AG04449 (cell line): ENCODE measurements at regions of chr1 and their contacts with region 1.

Region 1: DNA sequence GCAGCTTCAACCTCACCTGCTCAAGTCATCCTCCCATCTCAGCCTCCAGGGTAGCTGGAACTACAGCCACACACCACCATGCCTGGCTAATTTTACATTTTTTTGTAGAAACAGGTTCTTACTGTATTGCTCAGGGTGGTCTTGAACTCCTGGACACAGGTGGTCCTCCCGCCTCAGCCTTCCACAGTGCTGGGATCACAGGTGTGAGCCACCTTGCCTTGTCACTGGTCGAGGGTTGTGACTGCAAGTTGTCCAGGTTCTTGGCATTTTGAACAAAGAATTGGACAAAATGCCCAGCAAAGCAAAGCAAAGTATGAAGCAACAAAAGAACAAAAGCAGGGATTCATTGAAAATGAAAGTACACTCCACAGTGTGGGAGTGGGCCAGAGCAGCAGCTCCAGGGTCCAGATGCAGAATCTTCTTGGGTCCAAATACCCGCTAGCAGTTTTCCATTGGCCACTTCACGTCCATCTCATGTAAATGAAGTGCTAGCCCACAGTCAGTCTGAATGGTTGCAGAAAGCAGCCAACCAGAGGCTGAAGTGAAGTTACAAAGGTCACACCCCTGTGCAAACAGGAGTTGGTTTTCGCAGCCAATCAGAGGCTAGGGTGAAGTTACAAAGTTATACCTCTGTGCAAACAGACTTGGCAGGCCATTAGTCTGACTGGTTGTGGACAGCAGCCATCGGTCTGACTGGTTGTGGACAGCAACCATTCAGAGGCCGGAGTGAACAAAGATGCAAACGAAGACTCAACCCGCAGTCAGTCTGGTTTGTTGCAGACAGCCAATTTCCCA is 109.5 kb upstream of the KIF26B start:
- DNase-seq: no peak
- H3K4me3 ChIP-seq: no peak overlapping the region
- CTCF ChIP-seq: no peak

Region 2: DNA sequence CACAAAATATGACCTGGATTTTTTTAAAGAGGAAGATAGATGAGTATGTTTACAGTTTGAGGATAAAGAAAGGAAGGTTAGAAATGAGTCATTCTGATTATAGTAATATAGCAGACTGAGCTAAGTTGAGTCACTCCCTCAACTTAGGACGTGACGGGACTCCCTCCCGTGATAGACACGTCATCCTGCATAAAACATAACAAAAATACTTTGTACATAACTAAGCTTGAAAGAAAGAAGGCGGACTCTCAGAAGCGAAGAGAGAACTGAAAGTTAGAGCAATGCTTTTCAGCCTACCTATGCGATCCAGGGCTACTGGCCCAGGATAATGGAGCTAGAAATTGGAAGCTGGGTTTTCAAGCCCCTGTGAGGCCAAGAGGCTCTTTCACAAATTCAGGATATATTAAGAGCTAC is 445.3 kb before region 1 on chr1:
- CTCF ChIA-PET with region 1: interaction called, 25 read pairs
- POLR2A ChIA-PET with region 1: no interaction called
- DNase-seq: peak; percentile 84
- H3K4me3 ChIP-seq: peak overlapping the region; percentile 46
- CTCF ChIP-seq: no peak

Region 3: GRCh38 chr1:244835276-244836134 is 209.8 kb before region 1 on chr1 and contains the start of gene COX20:
- CTCF ChIA-PET with region 1: interaction called, 13 read pairs
- POLR2A ChIA-PET with region 1: interaction called, 4 read pairs
- DNase-seq: no peak
- H3K4me3 ChIP-seq: peak within 1 kb of the TSS; percentile 73
- CTCF ChIP-seq: no peak

Region 4: GRCh38 chr1:244854865-244855578 is 190.3 kb before region 1 on chr1:
- CTCF ChIA-PET with region 1: interaction called, 35 read pairs
- POLR2A ChIA-PET with region 1: no interaction called
- DNase-seq: no peak
- H3K4me3 ChIP-seq: no peak overlapping the region
- CTCF ChIP-seq: no peak

Region 5: DNA sequence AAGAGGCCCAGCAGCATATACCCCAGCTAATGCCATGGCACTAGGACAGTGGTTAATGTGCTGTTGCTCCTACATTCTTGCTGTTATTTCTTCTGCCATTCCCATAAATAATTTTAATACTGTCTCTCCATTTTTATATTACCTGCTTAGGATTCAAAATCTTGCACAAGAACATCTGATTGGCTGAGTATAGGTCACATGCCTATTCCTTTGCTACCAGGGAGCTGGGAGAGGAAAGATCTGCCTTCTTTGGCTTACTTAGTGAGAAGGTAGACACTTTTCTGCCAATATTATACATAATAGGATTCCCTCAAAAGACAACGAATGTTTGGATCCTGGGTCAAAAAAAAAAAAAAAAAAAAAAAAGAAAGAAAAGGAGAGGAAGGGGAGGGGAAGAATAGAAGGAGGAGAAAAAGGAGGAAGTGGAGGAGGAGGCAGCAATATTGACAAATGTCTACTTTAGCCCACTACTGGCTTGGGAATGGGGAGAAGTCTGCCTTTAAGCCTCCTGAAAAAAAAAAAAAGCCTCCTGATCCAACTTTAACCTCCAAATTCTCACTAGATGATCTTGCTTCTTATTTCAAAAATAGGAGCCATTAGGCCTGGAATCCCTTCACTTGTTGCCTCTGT is 46.5 kb before region 1 on chr1:
- CTCF ChIA-PET with region 1: interaction called, 13 read pairs
- POLR2A ChIA-PET with region 1: no interaction called
- DNase-seq: no peak
- H3K4me3 ChIP-seq: no peak overlapping the region
- CTCF ChIP-seq: no peak

Region 6: DNA sequence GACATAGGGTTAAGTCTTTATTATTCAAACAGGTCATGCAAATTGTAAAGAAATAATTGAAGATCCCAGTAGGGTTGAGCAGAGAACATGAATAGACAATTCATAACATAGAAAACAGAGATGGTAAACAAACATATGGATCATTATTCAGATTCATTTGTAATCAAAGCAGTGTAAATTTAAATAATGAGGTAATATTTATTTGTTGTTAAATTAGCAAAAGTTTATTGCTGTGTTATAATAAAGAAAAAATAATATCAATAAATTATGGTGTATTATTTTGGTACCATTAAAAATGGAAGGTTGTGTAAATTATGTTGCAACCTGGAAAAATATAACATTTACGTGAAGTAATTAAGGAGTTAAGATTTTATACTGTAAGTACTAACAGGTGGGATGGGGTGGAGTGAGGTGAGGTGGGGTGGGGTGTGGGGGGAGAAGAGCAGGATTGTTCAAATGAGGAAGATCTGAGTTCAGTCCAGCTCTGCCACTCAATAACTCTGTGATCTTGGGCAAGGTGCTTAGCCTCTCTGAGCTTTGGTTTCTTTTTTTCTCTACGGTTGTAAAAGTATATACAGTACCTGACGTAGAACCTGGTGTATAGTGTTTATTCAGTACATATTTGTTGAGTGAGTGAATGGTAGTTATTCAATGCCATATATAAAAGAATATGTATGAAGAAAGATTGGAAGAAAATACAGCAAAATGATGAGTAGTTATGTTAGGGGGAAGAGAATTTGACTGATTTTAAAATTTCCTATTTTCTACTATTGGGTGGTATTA is 30.8 kb before region 1 on chr1:
- CTCF ChIA-PET with region 1: interaction called, 28 read pairs
- POLR2A ChIA-PET with region 1: no interaction called
- DNase-seq: no peak
- H3K4me3 ChIP-seq: no peak overlapping the region
- CTCF ChIP-seq: no peak

Region 7: DNA sequence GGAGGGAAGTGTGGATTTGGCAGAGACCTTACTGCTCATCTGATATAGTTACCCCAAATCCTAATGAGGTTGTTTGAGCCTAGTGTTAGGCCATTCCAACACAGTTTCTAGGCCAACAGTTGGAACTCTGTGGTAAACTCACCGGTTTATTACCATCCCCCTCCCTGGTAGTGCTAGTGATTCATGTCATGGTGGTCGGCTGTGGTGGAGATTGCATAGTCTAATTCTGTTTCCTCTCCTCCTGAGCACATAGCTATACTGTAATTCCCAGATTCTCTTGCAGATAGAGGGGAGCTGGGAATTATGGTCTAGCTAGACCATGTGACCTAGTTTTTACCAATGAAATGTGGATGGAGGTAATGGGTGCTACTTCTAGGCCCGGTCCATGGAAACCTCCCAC is 14.2 kb before region 1 on chr1:
- CTCF ChIA-PET with region 1: interaction called, 47 read pairs
- POLR2A ChIA-PET with region 1: no interaction called
- DNase-seq: no peak
- H3K4me3 ChIP-seq: no peak overlapping the region
- CTCF ChIP-seq: no peak

Region 8: DNA sequence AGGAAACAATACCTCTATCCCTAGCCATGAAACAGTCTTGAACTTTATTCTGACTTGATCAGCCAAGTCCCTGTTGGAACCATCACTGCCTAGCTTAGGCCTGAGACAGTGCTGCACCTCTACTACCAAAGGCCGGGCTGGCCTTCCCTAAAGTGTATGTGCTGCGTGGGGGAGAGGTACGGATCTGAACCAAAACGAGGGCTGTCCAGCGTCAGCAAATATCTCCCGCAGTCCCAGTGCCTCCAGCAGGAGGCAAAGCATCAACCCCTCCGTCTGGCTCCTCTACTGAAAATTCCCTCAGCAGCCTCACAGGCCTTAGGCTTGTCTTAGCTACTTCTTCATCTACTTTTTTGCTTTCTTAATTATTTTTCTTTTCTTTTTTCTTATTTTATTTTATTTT is 76.2 kb after region 1 on chr1:
- CTCF ChIA-PET with region 1: no interaction called
- POLR2A ChIA-PET with region 1: no interaction called
- DNase-seq: no peak
- H3K4me3 ChIP-seq: no peak overlapping the region
- CTCF ChIP-seq: no peak